Activated CD4-positive, alpha-beta T cell treated with anti-CD3 and anti-CD28 coated beads for 36 hours (primary cell): ENCODE measurements at regions of chr12 and their contacts with region 1.

Region 1: DNA sequence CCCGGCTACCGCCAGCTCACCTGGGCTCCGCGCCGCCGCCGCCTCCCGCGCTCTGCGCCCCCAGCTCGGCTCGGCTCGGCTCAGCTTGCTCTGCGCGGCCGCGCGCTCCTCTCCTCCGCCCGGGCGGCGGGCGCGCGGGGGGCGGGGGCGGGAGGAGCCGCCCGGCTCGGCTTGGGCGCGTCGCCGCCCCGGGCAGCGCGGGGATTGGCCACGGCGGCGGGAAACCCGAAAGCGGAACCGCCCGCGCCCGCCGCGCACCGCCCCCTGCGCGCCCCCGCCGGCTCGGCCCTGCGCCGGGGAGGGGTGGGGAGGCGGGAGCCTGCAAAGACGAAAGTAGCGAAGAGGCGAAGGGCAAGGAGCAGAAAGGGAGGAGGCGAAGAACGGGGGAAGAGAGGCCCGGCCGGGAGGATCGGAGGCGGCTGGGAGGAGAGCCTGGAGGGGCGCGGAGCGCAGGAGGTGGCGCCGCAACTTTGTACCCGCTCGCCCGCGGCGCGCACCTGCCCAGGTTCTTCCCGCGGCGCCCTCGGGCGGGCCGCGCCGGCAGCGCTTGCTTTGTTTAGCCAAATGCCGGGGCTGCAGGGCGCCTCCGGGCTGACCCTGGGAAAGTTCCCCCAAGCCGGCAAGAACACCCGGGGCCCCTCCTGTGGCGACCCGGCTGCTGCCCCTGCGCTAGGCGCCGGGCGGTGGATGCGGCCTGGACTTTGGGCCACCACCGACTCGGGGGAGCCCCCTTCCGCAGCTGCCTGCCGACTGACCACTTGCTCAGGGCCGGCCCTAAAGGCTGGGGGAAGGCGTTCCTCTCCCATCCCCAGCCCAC is at the start of gene CAMKK2:
- DNase-seq: peak; percentile 92
- ATAC-seq: peak; percentile 86
- H3K4me3 Mint-ChIP-seq: peak within 1 kb of the TSS; percentile 88
- H3K27ac Mint-ChIP-seq: peak within 1 kb of the TSS; percentile 80
- H3K4me1 Mint-ChIP-seq: peaks cover 20% of the 10 kb centered on the region
- H3K27me3 Mint-ChIP-seq: no peaks in the 10 kb centered on the region
- total RNA-seq, gene CAMKK2: 24.2 to 30.3 TPM

Region 2: GRCh38 chr12:121015825-121016766 is 280.7 kb before region 1 on chr12 and contains the start of gene C12orf43:
- CTCF ChIA-PET with region 1: no interaction called
- POLR2A ChIA-PET with region 1: no interaction called
- intact Hi-C with region 1: loop called in 1 of 2 experiments (anchors 2 kb)
- DNase-seq: peak; percentile 97
- ATAC-seq: peak; percentile 99
- H3K4me3 Mint-ChIP-seq: peak within 1 kb of the TSS; percentile 91
- H3K27ac Mint-ChIP-seq: peak within 1 kb of the TSS; percentile 92
- H3K4me1 Mint-ChIP-seq: peaks cover 16% of the 10 kb centered on the region
- H3K27me3 Mint-ChIP-seq: no peaks in the 10 kb centered on the region
- total RNA-seq, gene C12orf43: 22.8 to 23.8 TPM

Region 3: DNA sequence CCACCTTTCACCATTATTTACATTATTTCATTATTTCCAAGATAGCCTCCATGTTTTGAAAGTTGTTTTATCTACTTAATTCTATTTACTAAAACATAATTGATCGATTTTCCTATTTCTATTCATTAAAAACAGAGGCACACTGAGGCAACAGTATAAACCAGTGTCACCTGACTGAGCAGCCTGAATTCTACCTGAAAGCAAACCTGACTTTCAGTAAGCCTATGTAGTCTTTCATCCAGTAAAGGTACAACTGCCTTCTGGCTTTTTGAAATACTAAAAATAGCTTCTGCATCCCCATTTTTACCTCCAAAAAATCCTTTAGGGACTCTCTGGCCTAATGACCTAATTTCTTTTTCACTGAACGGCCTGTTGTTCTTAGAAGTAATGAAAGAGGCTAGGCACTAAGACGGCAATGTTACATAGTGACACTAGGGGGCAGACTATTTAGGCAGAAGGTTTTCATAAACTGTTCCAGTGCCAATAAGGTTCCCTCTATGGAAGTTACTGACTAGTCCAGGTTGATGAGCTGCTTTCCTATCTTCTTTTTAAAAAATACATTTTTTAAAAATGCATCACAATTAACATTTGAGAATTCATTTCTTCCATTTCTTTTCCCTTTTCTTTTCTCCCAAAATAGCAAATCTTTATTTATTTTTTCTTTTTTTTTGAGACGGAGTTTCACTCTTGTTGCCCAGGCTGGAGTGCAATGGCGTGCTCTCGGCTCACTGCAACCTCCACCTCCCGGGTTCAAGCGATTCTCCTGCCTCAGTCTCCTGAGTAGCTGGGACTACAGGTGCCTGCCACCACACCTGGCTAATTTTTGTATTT is 37.9 kb after region 1 on chr12:
- CTCF ChIA-PET with region 1: interaction called, 4 read pairs
- POLR2A ChIA-PET with region 1: no interaction called
- intact Hi-C with region 1: loop called in 1 of 2 experiments (anchors 1 kb)
- DNase-seq: no peak
- ATAC-seq: peak; percentile 83
- H3K4me3 Mint-ChIP-seq: no peak overlapping the region
- H3K27ac Mint-ChIP-seq: no peak overlapping the region
- H3K4me1 Mint-ChIP-seq: no peaks in the 10 kb centered on the region
- H3K27me3 Mint-ChIP-seq: no peaks in the 10 kb centered on the region

Region 4: DNA sequence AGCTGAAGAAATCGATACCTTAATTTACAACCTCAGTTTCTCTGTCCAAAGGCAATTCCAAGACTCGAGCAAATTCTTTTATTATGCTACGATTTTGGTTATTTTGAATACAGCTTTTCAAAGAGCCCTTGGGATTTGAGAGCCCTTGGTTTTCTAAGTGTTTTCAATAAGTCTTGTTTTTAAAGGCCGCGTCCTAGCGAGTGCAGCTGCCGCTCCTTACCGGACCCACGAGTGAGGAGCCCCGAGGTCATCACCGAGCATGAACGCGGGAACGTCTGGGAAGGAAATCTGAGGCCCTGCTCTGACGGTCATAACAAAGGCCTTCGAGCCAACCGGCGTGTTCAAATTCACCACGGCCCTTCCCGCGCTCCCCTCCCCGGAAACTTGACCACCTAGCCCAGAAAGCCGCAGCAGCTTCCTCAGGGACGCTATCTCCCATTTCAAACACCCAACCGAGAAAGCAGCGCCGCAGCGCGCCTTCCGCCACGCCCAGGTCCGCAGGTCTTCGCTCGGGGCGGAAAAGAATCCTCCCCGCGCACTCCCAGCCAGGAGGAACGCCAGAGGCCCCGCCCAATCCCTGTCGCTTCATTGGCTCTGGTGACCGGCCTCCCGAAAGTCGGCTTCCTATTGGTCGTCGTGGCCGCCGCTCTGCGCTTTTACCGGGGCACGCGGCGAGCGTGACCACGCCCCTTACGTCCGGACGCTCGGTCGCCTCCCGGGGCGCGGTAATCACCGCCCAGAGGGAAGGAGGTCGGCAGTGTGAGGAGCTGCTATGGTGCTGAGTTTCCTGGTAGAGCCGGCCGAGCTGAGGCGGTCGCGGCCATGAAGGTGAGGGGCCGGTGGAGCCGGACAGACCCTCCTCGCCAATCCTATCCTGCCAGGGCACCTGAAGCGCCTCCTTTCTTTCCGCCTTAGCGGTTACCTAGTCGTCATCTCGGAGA is 102.8 kb after region 1 on chr12 and contains the start of gene RNF34:
- CTCF ChIA-PET with region 1: no interaction called
- POLR2A ChIA-PET with region 1: interaction called, 5 read pairs
- intact Hi-C with region 1: loop called in 1 of 2 experiments (anchors 1 kb)
- DNase-seq: peak; percentile 99
- ATAC-seq: peak; percentile 91
- H3K4me3 Mint-ChIP-seq: peak within 1 kb of the TSS; percentile 86
- H3K27ac Mint-ChIP-seq: peak within 1 kb of the TSS; percentile 93
- H3K4me1 Mint-ChIP-seq: peaks cover 33% of the 10 kb centered on the region
- H3K27me3 Mint-ChIP-seq: no peaks in the 10 kb centered on the region
- total RNA-seq, gene RNF34: 64.2 to 75.7 TPM

Region 5: GRCh38 chr12:121536899-121537813 is 240.3 kb after region 1 on chr12:
- CTCF ChIA-PET with region 1: interaction called, 3 read pairs
- POLR2A ChIA-PET with region 1: no interaction called
- intact Hi-C with region 1: loop called in 1 of 2 experiments (anchors 1 kb)
- DNase-seq: peak; percentile 76
- ATAC-seq: peak; percentile 40
- H3K4me3 Mint-ChIP-seq: peak overlapping the region; percentile 67
- H3K27ac Mint-ChIP-seq: peak overlapping the region; percentile 62
- H3K4me1 Mint-ChIP-seq: peaks cover 48% of the 10 kb centered on the region
- H3K27me3 Mint-ChIP-seq: no peaks in the 10 kb centered on the region

Region 6: DNA sequence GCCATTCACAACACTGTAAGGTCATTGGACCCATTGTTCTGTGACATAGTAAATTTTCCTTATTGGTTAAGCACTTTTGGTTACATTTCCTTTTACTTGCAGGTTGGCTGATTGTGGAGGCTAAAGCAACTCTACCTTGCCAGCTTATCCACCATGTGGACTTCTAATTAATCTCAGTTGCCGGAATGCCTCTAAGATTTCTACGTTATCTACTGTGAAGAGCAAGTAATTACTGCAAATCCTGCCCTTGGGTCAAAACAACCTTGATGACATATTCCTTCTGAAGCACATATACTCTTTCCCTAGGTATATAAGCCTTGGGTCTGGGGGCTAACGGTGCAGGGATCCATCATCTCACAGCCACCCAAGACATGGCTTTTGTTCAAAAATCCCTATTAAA is 392.1 kb after region 1 on chr12:
- CTCF ChIA-PET with region 1: no interaction called
- POLR2A ChIA-PET with region 1: no interaction called
- intact Hi-C with region 1: loop called in 1 of 2 experiments (anchors 1 kb)
- DNase-seq: no peak
- ATAC-seq: no peak
- H3K4me3 Mint-ChIP-seq: no peak overlapping the region
- H3K27ac Mint-ChIP-seq: no peak overlapping the region
- H3K4me1 Mint-ChIP-seq: peaks cover 7% of the 10 kb centered on the region
- H3K27me3 Mint-ChIP-seq: no peaks in the 10 kb centered on the region

Region 7: DNA sequence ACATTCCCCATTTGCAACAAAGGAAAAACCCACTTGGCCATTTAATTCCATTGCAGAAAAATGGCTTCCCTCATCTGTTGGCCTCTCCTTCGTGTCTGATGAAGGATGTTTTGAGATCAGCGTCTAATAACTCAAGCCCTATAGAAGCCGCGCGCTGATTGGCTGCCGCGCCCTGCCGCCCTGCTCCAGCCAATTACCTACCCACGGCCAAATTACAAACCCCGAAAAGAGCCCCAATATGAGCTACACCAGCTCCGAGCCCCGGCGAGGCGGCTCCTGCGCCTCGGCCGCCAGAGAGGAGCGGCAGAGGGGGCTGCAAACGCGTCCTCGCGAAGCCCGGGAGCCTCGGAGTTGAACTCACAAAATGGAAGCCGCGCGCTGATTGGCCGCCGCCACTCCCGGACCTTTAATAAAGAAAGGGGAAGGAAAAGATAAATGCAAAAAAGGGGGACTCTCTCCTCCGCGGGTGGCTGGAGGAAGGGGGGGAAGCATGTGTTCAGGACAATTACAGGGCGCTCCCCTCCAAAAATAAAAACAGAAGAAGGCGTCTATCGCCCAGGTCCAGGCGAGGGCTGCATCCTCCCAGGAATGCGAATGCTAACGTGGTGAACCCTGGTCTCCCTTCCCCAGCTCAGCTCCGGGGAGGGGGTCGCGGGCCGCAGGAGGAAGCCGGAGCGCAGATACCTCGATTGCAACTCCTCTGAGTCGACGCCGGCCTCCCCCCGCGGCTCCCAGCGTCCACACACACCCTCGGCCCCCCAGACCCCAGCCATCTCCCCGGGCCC is 506.2 kb after region 1 on chr12:
- CTCF ChIA-PET with region 1: no interaction called
- POLR2A ChIA-PET with region 1: no interaction called
- intact Hi-C with region 1: loop called in 1 of 2 experiments (anchors 5 kb)
- DNase-seq: peak; percentile 95
- ATAC-seq: peak; percentile 62
- H3K4me3 Mint-ChIP-seq: peak overlapping the region; percentile 88
- H3K27ac Mint-ChIP-seq: peak overlapping the region; percentile 99
- H3K4me1 Mint-ChIP-seq: peaks cover 30% of the 10 kb centered on the region
- H3K27me3 Mint-ChIP-seq: no peaks in the 10 kb centered on the region